ENCODE measurements at regions of chr17 and their contacts with region 1.

Region 1: DNA sequence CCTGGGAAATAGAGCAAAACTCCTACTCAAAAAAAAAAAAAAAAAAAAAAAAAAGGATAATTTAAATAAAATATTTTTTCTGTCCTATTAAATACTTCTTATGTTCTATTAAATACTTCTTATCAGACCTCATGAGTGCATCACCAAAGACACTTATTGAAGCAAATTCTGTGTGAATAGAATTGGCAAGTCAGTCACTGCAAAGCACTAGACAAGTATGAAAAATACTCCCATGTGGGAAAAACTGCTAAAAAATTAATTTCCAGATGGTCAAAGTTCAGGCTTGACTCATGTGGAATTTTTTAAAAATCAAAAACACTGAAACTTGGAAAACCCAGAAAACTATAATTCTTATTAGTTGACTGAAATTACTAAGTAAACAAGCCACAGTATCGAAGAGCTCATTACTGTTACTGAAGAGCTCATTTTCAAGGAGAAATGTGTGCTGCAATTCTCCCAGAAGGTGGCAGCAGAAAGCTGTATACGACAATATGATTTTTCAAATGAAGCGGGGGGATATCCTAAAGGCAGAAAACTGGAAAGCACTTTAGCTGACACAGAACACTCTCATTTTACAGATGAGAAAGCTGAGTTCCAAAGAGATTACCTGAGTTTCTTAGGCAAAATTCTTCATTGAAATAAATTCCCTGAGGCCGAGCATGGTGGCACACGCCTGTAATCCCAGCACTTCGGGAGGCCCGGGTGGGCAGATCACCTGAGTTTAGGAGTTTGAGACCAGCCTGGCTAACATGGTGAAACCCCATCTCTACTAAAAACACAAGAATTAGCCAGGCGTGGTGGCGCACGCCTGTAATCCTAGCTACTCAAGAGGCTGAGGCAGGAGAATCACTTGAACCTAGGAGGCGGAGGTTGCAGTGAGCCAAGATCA is 15.9 kb upstream of the FBXO47 start:
- DNase-seq: peak; percentile 57
- ATAC-seq: peak; percentile 72
- H3K4me3 Mint-ChIP-seq: no peak overlapping the region
- H3K27ac Mint-ChIP-seq: no peak overlapping the region
- H3K4me1 Mint-ChIP-seq: peaks cover 6% of the 10 kb centered on the region
- H3K27me3 Mint-ChIP-seq: no peaks in the 10 kb centered on the region

Region 2: GRCh38 chr17:38967290-38967738 is 15.8 kb before region 1 on chr17 and contains the start of gene FBXO47:
- CTCF ChIA-PET with region 1: interaction called, 13 read pairs
- POLR2A ChIA-PET with region 1: no interaction called
- intact Hi-C with region 1: loop called in 1 of 2 experiments (anchors 2 kb)
- DNase-seq: peak; percentile 91
- ATAC-seq: peak; percentile 98
- H3K4me3 Mint-ChIP-seq: peak within 1 kb of the TSS; percentile 64
- H3K27ac Mint-ChIP-seq: peak within 1 kb of the TSS; percentile 87
- H3K4me1 Mint-ChIP-seq: peaks cover 16% of the 10 kb centered on the region
- H3K27me3 Mint-ChIP-seq: no peaks in the 10 kb centered on the region
- total RNA-seq, gene FBXO47: 0.11 to 0.16 TPM

Region 3: DNA sequence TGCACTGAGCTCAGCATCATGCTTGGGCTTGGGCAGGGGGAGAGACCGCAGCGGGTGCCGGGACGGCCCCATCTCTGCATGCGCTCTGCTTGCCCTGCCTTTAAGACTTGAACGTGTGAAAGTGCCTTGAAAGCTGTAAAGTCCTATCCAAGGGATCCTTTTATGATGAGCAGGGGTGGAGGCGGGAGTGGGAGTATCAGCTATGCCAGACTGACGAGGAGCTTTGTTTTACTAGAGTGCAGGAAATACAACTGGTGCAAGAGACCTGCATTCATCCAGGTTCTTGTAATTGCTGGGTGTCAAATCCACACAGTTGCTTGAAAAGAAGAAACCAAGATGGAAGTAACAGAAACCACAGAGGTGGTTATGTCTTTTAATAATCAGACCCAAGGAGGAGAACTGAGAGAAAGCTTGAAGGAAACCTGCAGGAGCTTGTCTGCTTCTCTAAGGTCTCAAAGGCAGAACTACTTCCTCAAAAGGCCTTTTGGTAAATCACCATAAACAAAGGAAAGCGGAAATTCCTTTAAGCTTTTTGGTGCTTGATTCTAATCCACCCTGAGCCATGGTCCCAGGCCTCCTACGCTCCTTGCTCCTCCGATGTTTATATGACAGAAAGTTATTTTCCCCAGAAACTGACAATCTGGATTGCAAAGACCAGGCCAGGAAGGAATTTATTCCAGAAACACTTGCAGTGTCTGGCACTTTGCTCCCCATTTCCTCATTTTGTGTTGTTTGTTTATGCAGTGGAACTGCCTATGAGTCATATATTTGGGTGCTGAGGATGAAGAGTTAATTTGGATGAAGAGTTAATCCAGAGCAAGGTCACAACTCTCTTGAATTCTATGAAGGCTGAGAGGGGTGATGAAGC is 35.4 kb after region 1 on chr17:
- CTCF ChIA-PET with region 1: interaction called, 18 read pairs
- POLR2A ChIA-PET with region 1: no interaction called
- intact Hi-C with region 1: no loop called
- DNase-seq: peak; percentile 75
- ATAC-seq: peak; percentile 87
- H3K4me3 Mint-ChIP-seq: no peak overlapping the region
- H3K27ac Mint-ChIP-seq: peak overlapping the region; percentile 27
- H3K4me1 Mint-ChIP-seq: peaks cover 30% of the 10 kb centered on the region
- H3K27me3 Mint-ChIP-seq: no peaks in the 10 kb centered on the region

Region 4: GRCh38 chr17:39057701-39058206 is 74.7 kb after region 1 on chr17:
- CTCF ChIA-PET with region 1: interaction called, 11 read pairs
- POLR2A ChIA-PET with region 1: no interaction called
- intact Hi-C with region 1: loop called in 1 of 2 experiments (anchors 5 kb)
- DNase-seq: no peak
- ATAC-seq: no peak
- H3K4me3 Mint-ChIP-seq: peak overlapping the region; percentile 67
- H3K27ac Mint-ChIP-seq: no peak overlapping the region
- H3K4me1 Mint-ChIP-seq: peaks cover 15% of the 10 kb centered on the region
- H3K27me3 Mint-ChIP-seq: no peaks in the 10 kb centered on the region

Region 5: DNA sequence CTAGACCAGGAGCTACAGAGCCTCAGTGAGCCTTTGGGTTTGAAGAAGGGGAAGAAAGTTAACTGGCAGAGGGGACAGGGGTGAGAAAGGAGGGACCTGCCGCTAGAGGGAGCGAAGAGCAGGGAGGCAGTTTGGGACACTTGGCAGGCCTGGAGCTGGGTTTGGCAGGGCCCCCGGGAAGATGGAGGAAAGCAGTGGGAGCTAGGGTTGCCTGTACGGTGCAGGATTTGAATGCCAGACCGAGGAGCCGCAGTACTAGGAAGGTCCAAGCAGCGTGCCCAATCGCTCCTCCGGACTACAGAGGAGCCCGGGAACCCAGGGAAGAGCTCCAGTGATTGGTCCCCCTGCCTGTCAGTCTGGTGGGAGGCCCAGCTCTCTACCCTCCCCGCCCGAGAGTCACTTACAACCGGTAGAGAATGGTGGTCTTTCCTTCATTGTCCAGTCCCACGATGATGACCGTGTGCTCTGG is 181.6 kb after region 1 on chr17:
- CTCF ChIA-PET with region 1: interaction called, 49 read pairs
- POLR2A ChIA-PET with region 1: no interaction called
- intact Hi-C with region 1: no loop called
- DNase-seq: peak; percentile 86
- ATAC-seq: peak; percentile 96
- H3K4me3 Mint-ChIP-seq: peak overlapping the region; percentile 85
- H3K27ac Mint-ChIP-seq: peak overlapping the region; percentile 76
- H3K4me1 Mint-ChIP-seq: peaks cover 24% of the 10 kb centered on the region
- H3K27me3 Mint-ChIP-seq: peaks cover 24% of the 10 kb centered on the region

Region 6: GRCh38 chr17:39235555-39236449 is 252.7 kb after region 1 on chr17:
- CTCF ChIA-PET with region 1: interaction called, 5 read pairs
- POLR2A ChIA-PET with region 1: no interaction called
- intact Hi-C with region 1: loop called (anchors 5 kb)
- DNase-seq: peak; percentile 78
- ATAC-seq: peak; percentile 84
- H3K4me3 Mint-ChIP-seq: no peak overlapping the region
- H3K27ac Mint-ChIP-seq: no peak overlapping the region
- H3K4me1 Mint-ChIP-seq: peaks cover 41% of the 10 kb centered on the region
- H3K27me3 Mint-ChIP-seq: peaks cover 5% of the 10 kb centered on the region